PC-3 (cell line): ENCODE measurements at regions of chr10 and their contacts with region 1.

Region 1: GRCh38 chr10:79195091-79195923 is 126.5 kb downstream of the ZMIZ1 start:
- DNase-seq: peak; percentile 100
- ATAC-seq: peak; percentile 80
- H3K4me3 ChIP-seq: no peak overlapping the region
- H3K27ac ChIP-seq: no peak overlapping the region
- H3K4me1 ChIP-seq: peaks cover 28% of the 10 kb centered on the region
- H3K27me3 ChIP-seq: no peaks in the 10 kb centered on the region
- CTCF ChIP-seq: peak; percentile 100

Region 2: GRCh38 chr10:78047314-78047891 is 1147.9 kb before region 1 on chr10:
- CTCF ChIA-PET with region 1: interaction called, 3 read pairs
- POLR2A ChIA-PET with region 1: no interaction called
- intact Hi-C with region 1: loop called (anchors 1 kb)
- DNase-seq: peak; percentile 100
- ATAC-seq: peak; percentile 75
- H3K4me3 ChIP-seq: no peak overlapping the region
- H3K27ac ChIP-seq: no peak overlapping the region
- H3K4me1 ChIP-seq: no peaks in the 10 kb centered on the region
- H3K27me3 ChIP-seq: no peaks in the 10 kb centered on the region
- CTCF ChIP-seq: peak; percentile 100

Region 3: GRCh38 chr10:78424719-78425118 is 770.6 kb before region 1 on chr10:
- CTCF ChIA-PET with region 1: no interaction called
- POLR2A ChIA-PET with region 1: no interaction called
- intact Hi-C with region 1: loop called (anchors 1 kb)
- DNase-seq: peak; percentile 92
- ATAC-seq: peak; percentile 98
- H3K4me3 ChIP-seq: no peak overlapping the region
- H3K27ac ChIP-seq: no peak overlapping the region
- H3K4me1 ChIP-seq: no peaks in the 10 kb centered on the region
- H3K27me3 ChIP-seq: peaks cover 35% of the 10 kb centered on the region
- CTCF ChIP-seq: peak; percentile 99

Region 4: DNA sequence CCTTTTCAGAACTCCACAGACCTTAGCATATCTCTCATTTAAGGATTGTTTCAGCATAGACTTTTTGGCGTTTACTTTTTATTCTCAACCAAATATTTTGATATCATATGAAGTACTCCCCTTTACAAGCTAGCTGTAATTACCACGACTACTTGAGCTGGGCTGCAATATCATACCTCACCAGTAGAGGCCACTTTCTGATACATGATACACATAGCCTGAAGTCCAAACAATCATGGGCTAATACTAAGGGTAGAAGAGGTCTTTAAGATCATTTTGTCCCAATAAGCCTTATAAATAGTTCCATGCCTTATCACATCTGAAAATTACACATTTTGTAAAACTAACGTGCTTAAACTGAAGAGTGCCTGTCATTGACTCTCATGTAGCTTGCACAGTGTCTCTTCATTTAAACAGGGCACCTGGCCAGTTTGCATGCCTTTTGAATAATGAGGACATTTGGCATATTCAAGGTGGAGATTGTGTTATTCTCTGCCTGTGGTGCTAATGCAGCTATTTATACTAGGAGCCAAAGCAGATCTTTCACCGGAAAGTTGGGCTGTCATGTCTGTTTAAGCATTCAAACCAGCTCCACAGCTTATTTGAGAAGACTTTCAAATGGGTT is 530.3 kb before region 1 on chr10:
- CTCF ChIA-PET with region 1: interaction called, 5 read pairs
- POLR2A ChIA-PET with region 1: no interaction called
- intact Hi-C with region 1: loop called (anchors 2 kb)
- DNase-seq: peak; percentile 98
- ATAC-seq: peak; percentile 86
- H3K4me3 ChIP-seq: no peak overlapping the region
- H3K27ac ChIP-seq: no peak overlapping the region
- H3K4me1 ChIP-seq: no peaks in the 10 kb centered on the region
- H3K27me3 ChIP-seq: peaks cover 34% of the 10 kb centered on the region
- CTCF ChIP-seq: peak; percentile 100

Region 5: DNA sequence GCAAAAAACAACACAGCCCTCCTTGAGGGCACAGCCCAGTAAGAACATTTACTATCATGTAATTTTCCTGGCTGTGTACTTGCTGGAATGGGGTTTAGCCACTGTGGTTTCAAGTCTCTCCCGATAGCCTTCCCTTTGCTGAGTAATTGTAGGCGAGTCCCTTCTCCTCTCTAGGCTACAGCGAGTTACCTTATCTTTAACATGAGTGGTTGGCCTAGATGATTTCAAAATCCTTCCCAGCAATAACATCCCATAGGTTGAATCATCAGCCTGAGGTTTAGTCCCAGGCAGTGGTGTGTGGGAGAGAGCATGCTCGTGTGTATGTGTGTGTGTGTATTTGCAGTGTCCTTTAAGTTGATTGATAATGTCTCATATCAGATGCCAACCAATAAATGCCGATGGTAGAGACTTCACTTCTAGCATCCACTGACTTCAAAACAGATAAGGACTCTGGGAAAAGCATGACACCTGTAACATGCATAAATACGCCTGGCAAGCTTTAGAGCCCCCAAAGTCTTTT is 269.4 kb before region 1 on chr10:
- CTCF ChIA-PET with region 1: no interaction called
- POLR2A ChIA-PET with region 1: no interaction called
- intact Hi-C with region 1: loop called (anchors 1 kb)
- DNase-seq: peak; percentile 100
- ATAC-seq: peak; percentile 53
- H3K4me3 ChIP-seq: no peak overlapping the region
- H3K27ac ChIP-seq: peak overlapping the region; percentile 65
- H3K4me1 ChIP-seq: peaks cover 51% of the 10 kb centered on the region
- H3K27me3 ChIP-seq: no peaks in the 10 kb centered on the region
- CTCF ChIP-seq: no peak

Region 6: GRCh38 chr10:78944723-78945312 is 250.5 kb before region 1 on chr10:
- CTCF ChIA-PET with region 1: no interaction called
- POLR2A ChIA-PET with region 1: no interaction called
- intact Hi-C with region 1: no loop called
- DNase-seq: peak; percentile 77
- ATAC-seq: peak; percentile 53
- H3K4me3 ChIP-seq: no peak overlapping the region
- H3K27ac ChIP-seq: no peak overlapping the region
- H3K4me1 ChIP-seq: no peaks in the 10 kb centered on the region
- H3K27me3 ChIP-seq: no peaks in the 10 kb centered on the region
- CTCF ChIP-seq: no peak

Region 7: GRCh38 chr10:79127151-79127961 is 68.0 kb before region 1 on chr10:
- CTCF ChIA-PET with region 1: interaction called, 17 read pairs
- POLR2A ChIA-PET with region 1: no interaction called
- intact Hi-C with region 1: loop called (anchors 1 kb)
- DNase-seq: peak; percentile 100
- ATAC-seq: peak; percentile 90
- H3K4me3 ChIP-seq: no peak overlapping the region
- H3K27ac ChIP-seq: peak overlapping the region; percentile 62
- H3K4me1 ChIP-seq: peaks cover 41% of the 10 kb centered on the region
- H3K27me3 ChIP-seq: no peaks in the 10 kb centered on the region
- CTCF ChIP-seq: peak; percentile 54; the same call in 1 of the 2 replicates